ENCODE measurements at regions of chr11 and their contacts with region 1.

Region 1: DNA sequence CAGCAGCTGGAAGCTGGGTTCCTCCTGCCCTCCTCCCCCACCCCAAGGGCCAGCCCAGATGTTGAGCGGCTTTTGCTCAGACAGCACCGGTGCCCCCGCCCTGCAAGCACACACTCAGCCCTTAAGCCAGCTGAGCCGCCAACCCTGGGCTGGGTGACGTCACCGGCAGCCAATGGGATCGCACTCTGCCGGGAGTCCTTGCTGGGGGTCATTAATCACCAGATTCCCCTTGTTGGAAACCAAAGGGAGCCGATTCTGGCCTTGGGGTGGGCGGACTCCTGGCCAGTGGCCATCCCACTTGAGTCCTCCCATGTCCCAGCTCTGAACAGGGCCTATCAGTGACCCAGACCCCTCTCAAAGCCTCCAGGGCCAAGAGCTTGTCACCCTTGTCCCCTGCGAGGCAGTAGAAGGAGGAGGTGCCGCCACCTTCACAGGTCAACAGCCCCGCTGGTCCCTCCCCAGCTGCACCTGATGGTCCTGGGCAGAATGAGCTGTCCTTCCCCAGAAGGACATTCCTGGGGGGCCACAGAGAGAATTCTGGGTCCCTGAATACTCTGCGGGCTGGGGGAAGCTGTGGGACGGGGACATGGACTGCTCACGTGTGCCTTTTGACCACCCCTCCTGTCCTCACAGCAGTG is 7.4 kb downstream of the DUSP8 start:
- DNase-seq: no peak
- ATAC-seq: no peak
- H3K4me3 ChIP-seq: no peak overlapping the region
- H3K27ac ChIP-seq: no peak overlapping the region
- H3K4me1 ChIP-seq: peaks cover 2% of the 10 kb centered on the region
- H3K27me3 ChIP-seq: no peaks in the 10 kb centered on the region
- CTCF ChIP-seq: no peak

Region 2: DNA sequence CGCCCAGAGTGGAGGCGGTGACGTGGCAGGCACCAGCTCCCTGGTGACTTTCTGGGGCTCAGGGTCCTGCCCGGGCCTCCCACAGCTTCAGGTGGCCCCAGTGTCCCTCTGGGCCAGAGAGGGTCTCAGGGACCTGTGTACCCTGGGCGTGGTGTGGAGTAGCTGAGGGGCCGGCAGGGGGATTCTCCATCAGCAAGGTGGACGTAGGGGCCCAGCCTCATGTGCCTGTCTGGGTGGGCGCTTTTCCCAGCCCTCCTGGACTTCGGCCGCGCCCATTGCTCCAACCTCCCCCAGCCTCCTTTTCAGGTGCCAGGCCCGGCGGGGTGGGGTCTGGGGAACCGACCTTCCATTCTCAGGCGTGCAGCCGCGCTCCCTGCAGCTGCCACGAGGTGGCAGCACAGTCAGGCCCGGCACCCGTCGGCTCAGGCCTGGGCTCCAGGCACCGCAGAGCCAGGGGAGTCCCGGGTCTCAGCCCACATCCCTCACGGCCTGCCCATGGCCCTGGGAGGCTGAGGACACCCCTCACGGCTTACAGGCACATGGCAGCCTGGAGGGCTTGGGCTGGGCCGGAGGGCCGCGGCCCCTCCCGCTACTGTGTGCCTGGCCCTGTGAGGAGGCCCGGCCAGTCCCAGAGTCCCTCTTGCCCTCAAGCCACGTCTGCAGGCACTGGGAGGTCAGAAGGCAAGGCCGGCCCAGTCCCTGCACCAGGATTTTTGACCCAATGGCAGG is 361.7 kb before region 1 on chr11:
- CTCF ChIA-PET with region 1: no interaction called
- POLR2A ChIA-PET with region 1: no interaction called
- in situ Hi-C with region 1: no loop called
- intact Hi-C with region 1: no loop called
- DNase-seq: peak; percentile 32
- ATAC-seq: peak; percentile 87
- H3K4me3 ChIP-seq: 0 out of 4 replicates have a peak overlapping the region, but pooled peaks of 1 of the 2 experiments have one; percentile 3
- H3K27ac ChIP-seq: peak overlapping the region; percentile 32
- H3K4me1 ChIP-seq: peaks cover 18% of the 10 kb centered on the region
- H3K27me3 ChIP-seq: no peaks in the 10 kb centered on the region
- CTCF ChIP-seq: peak; percentile 100

Region 3: GRCh38 chr11:1586699-1587098 is 22.0 kb after region 1 on chr11:
- CTCF ChIA-PET with region 1: interaction called, 12 read pairs
- POLR2A ChIA-PET with region 1: no interaction called
- in situ Hi-C with region 1: no loop called
- intact Hi-C with region 1: no loop called
- DNase-seq: no peak
- ATAC-seq: no peak
- H3K4me3 ChIP-seq: no peak overlapping the region
- H3K27ac ChIP-seq: no peak overlapping the region
- H3K4me1 ChIP-seq: peaks cover 3% of the 10 kb centered on the region; the same call in 1 of the 2 replicates
- H3K27me3 ChIP-seq: no peaks in the 10 kb centered on the region
- CTCF ChIP-seq: no peak

Measured in Panc1 (cell line).